ENCODE measurements at regions of chr4 and their contacts with region 1.

Region 1: GRCh38 chr4:184782731-184783373 is 42.9 kb downstream of the ACSL1 start:
- DNase-seq: peak in 1 of 9 experiments; percentile 14
- ATAC-seq: peak; percentile 36
- H3K4me3 ChIP-seq: no peak overlapping the region
- H3K4me3 Mint-ChIP-seq: peak overlapping the region; percentile 65
- H3K27ac ChIP-seq: no peak overlapping the region
- H3K27ac Mint-ChIP-seq: peak overlapping the region; percentile 60
- H3K4me1 ChIP-seq: no peaks in the 10 kb centered on the region
- H3K4me1 Mint-ChIP-seq: peaks cover 16% of the 10 kb centered on the region
- H3K27me3 ChIP-seq: no peaks in the 10 kb centered on the region
- H3K27me3 Mint-ChIP-seq: no peaks in the 10 kb centered on the region
- CTCF ChIP-seq: no peak

Region 2: DNA sequence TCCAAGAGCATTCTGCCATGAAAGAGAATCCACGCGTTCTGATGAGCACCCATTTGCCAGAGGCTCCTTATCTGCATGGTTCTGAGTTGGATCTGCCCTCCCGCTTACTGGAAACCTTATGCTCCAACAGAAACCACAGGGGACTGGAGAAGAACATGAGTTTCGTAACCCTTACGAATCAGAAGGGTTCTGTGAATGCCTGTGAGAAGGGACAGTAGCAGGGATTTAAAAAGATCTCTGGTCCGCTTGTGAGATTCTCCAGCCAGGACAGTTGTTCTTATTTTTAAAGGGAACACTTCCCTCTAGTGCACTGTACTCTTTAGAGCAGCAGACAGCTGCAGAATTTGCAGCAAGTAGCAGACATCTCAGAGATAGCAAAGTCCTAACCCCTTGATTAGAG is 26.5 kb before region 1 on chr4:
- CTCF ChIA-PET with region 1: no interaction called
- POLR2A ChIA-PET with region 1: no interaction called
- intact Hi-C with region 1: loop called in 1 of 2 experiments (anchors 1 kb)
- DNase-seq: no peak
- ATAC-seq: no peak
- H3K4me3 ChIP-seq: no peak overlapping the region
- H3K4me3 Mint-ChIP-seq: no peak overlapping the region
- H3K27ac ChIP-seq: no peak overlapping the region
- H3K27ac Mint-ChIP-seq: no peak overlapping the region
- H3K4me1 ChIP-seq: peaks cover under 1% of the 10 kb centered on the region
- H3K4me1 Mint-ChIP-seq: peaks cover under 1% of the 10 kb centered on the region
- H3K27me3 ChIP-seq: no peaks in the 10 kb centered on the region
- H3K27me3 Mint-ChIP-seq: no peaks in the 10 kb centered on the region
- CTCF ChIP-seq: no peak

Measured in CD8-positive, alpha-beta T cell (primary cell).